CD8-positive, alpha-beta T cell (primary cell): ENCODE measurements at regions of chr4 and their contacts with region 1.

Region 1: DNA sequence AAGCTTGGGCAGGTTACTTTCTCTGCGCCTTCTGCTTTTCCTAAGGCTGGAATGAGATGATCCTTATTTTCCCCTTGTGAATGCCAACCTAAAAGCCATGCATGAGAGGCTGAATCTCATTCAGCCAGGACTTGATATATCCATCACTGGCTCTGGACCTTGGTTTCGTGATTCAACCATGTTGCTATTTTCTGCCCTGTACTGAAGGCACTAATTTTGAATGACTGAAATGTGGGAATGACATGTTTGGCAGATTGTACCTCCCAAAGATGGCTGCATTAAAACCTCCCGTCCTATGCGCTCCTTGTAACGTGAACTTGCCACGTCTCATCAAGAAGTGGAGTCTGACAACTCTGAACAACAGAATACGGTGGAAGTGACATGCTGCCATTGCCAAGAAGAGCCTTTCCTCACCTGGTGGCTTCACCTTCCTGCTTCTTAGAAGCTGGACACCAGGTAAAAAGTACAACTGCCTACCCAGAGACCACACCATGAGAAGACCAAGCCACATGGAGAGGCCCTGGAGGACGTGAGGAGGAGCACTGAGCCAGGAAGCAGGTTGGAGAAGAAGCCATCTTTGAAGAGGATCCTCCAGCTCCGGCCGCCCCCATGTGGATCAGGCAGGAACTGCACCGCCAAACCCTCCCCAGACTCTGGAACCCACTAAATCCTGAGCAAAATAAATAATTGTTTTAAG is 174.5 kb downstream of the NSUN7 start:
- DNase-seq: peak; percentile 29 to 69 (median 46)
- ATAC-seq: peak; percentile 75
- H3K4me3 ChIP-seq: no peak overlapping the region
- H3K4me3 Mint-ChIP-seq: no peak overlapping the region
- H3K27ac ChIP-seq: no peak overlapping the region
- H3K27ac Mint-ChIP-seq: no peak overlapping the region
- H3K4me1 ChIP-seq: no peaks in the 10 kb centered on the region
- H3K4me1 Mint-ChIP-seq: no peaks in the 10 kb centered on the region
- H3K27me3 ChIP-seq: no peaks in the 10 kb centered on the region
- H3K27me3 Mint-ChIP-seq: peaks cover 13% of the 10 kb centered on the region
- CTCF ChIP-seq: peak; percentile 68

Region 2: DNA sequence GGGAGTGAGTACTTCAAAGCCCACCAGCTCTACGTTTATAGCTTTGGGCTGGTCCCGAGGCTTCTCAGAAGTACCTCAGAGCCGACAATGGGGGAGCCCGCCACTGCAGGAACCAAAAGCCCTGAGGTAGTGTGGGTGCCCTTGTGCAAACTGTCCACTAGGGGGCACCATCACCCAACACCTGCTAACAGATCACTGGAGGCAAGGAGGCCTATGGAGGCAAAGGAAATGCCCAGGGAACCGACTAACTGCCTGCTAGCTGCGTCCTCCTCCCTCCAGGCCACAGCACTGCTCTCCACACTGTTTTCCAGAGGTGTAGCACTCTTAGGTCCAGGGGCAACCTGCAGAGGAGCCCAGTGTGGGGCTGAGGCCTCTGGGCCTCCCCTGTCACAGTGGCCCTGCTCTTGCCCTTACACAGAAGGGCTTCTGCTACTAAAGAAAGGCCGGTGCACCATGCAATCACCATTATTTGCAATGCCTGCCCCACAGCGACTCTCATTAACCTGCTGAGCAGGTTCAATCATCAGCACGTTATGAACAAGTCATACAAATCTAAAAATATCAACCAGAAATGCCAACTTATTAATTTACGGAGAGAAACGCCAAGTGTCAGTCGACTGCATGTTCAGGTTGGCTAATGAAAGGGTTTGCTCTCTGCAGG is 15.4 kb before region 1 on chr4:
- CTCF ChIA-PET with region 1: interaction called, 27 read pairs
- POLR2A ChIA-PET with region 1: no interaction called
- intact Hi-C with region 1: no loop called
- DNase-seq: peak; percentile 16 to 69 (median 46)
- ATAC-seq: peak; percentile 69
- H3K4me3 ChIP-seq: no peak overlapping the region
- H3K4me3 Mint-ChIP-seq: no peak overlapping the region
- H3K27ac ChIP-seq: no peak overlapping the region
- H3K27ac Mint-ChIP-seq: no peak overlapping the region
- H3K4me1 ChIP-seq: no peaks in the 10 kb centered on the region
- H3K4me1 Mint-ChIP-seq: peaks cover 11% of the 10 kb centered on the region
- H3K27me3 ChIP-seq: no peaks in the 10 kb centered on the region
- H3K27me3 Mint-ChIP-seq: no peaks in the 10 kb centered on the region
- CTCF ChIP-seq: peak; percentile 71

Region 3: DNA sequence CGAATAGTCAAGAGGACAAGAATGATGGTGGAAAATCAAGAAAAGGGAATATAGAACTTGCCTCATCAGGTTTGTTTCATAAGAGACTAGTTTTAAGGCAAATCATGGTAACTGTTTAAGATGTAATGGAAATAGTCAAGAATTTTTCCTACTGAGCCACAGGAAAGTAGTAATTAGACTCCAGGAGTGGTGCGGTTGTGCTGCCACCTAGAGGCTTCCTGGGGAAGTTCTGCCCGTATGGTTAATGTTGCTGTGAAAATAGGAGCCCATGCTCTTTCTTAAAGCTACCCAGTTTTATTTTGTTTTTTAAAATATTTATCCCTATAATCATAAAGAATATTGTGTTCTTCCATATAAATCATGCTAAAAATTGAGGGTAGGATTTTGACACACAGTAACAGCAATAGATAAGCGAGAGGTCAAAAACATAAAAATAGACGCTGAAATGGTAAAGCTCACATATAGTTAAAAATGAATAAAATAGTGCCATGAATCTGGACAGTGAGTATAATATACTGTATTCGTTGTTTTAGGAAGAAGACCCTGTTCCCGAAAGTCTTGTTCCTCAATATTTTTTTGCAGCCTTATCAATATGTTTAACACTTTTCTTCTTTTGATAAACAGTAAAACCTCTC is 737.3 kb after region 1 on chr4:
- CTCF ChIA-PET with region 1: no interaction called
- POLR2A ChIA-PET with region 1: no interaction called
- intact Hi-C with region 1: loop called in 1 of 2 experiments (anchors 5 kb)
- DNase-seq: peak in 7 of 9 experiments; percentile 6 to 31 (median 17)
- ATAC-seq: no peak
- H3K4me3 ChIP-seq: no peak overlapping the region
- H3K4me3 Mint-ChIP-seq: no peak overlapping the region
- H3K27ac ChIP-seq: no peak overlapping the region
- H3K27ac Mint-ChIP-seq: no peak overlapping the region
- H3K4me1 ChIP-seq: no peaks in the 10 kb centered on the region
- H3K4me1 Mint-ChIP-seq: no peaks in the 10 kb centered on the region
- H3K27me3 ChIP-seq: no peaks in the 10 kb centered on the region
- H3K27me3 Mint-ChIP-seq: peaks cover 5% of the 10 kb centered on the region
- CTCF ChIP-seq: peak; percentile 87

Region 4: GRCh38 chr4:41887821-41888686 is 963.8 kb after region 1 on chr4:
- CTCF ChIA-PET with region 1: no interaction called
- POLR2A ChIA-PET with region 1: no interaction called
- intact Hi-C with region 1: loop called in 1 of 2 experiments (anchors 5 kb)
- DNase-seq: peak in 7 of 9 experiments; percentile 17 to 63 (median 47)
- ATAC-seq: no peak
- H3K4me3 ChIP-seq: no peak overlapping the region
- H3K4me3 Mint-ChIP-seq: no peak overlapping the region
- H3K27ac ChIP-seq: no peak overlapping the region
- H3K27ac Mint-ChIP-seq: no peak overlapping the region
- H3K4me1 ChIP-seq: no peaks in the 10 kb centered on the region
- H3K4me1 Mint-ChIP-seq: no peaks in the 10 kb centered on the region
- H3K27me3 ChIP-seq: no peaks in the 10 kb centered on the region
- H3K27me3 Mint-ChIP-seq: peaks cover 28% of the 10 kb centered on the region
- CTCF ChIP-seq: peak; percentile 99